ENCODE measurements at regions of chr2 and their contacts with region 1.

Region 1: DNA sequence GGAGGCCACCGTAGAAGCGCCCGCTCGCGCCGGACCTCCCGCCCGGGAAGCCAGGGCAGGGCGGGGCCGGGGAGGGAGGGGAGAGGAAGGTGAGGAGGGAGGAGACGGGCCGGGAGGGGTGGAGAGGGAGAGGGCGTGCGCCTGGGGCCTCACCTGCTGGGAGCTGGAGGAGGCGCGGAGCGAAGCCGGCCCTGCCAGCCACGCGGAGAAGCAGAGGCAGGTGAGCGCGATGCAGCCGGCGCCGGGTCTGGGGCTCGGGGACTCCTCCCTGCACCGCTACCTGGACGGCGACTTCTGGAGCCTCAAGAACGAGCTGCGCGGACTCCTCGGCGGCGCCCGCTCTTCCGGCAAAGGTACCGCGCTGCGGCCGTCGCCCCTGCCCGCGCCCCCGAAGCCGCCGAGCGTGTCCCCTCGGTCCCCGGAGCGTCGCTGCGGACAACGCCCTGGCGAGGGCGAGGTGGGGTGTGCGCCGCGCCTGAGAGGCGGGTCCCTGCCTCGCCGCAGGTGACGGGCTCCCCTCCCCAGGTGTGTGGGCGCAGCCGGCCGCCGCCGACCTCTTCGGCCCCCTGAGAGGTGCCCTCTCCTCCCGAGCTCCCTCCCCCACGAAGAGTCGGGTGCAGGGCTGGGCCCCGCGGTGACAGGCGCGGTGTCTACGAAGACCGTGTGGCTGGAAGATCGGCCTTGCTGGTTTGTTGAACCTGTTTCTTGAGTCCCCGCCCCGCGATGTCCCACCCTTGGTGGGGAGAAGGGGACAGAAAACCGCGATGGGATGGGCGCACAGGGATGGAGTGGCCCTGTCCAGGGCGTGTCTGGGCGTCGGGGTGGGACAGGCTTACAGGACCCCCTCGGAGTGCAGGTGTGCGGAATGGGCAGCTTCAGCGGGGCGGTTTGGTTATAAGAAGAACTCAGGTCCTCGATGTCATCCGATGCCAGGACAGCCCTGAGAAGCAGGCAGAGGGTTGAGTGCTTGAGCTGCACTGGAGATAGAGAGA is at the start of gene ACOXL:
- DNase-seq: no peak
- H3K4me3 ChIP-seq: peak within 1 kb of the TSS; percentile 9 to 35
- H3K27ac ChIP-seq: no peak within 1 kb of the TSS
- H3K4me1 ChIP-seq: peaks cover 0 to 15% (median 12%) of the 10 kb centered on the region in 4 donors
- H3K27me3 ChIP-seq: peaks cover 0 to 49% of the 10 kb centered on the region in 2 donors
- CTCF ChIP-seq: no peak

Region 2: GRCh38 chr2:110688594-110689091 is 44.1 kb before region 1 on chr2:
- intact Hi-C with region 1: loop called (anchors 10 kb)
- DNase-seq: no peak
- H3K4me3 ChIP-seq: no peak overlapping the region
- H3K27ac ChIP-seq: no peak overlapping the region
- H3K4me1 ChIP-seq: no peaks in the 10 kb centered on the region
- H3K27me3 ChIP-seq: no peaks in the 10 kb centered on the region
- CTCF ChIP-seq: no peak

Region 3: GRCh38 chr2:110788976-110789375 is 56.3 kb after region 1 on chr2:
- intact Hi-C with region 1: no loop called
- DNase-seq: no peak
- H3K4me3 ChIP-seq: no peak overlapping the region
- H3K27ac ChIP-seq: no peak overlapping the region
- H3K4me1 ChIP-seq: no peaks in the 10 kb centered on the region
- H3K27me3 ChIP-seq: peaks cover 0 to 29% of the 10 kb centered on the region in 2 donors
- CTCF ChIP-seq: no peak

Region 4: DNA sequence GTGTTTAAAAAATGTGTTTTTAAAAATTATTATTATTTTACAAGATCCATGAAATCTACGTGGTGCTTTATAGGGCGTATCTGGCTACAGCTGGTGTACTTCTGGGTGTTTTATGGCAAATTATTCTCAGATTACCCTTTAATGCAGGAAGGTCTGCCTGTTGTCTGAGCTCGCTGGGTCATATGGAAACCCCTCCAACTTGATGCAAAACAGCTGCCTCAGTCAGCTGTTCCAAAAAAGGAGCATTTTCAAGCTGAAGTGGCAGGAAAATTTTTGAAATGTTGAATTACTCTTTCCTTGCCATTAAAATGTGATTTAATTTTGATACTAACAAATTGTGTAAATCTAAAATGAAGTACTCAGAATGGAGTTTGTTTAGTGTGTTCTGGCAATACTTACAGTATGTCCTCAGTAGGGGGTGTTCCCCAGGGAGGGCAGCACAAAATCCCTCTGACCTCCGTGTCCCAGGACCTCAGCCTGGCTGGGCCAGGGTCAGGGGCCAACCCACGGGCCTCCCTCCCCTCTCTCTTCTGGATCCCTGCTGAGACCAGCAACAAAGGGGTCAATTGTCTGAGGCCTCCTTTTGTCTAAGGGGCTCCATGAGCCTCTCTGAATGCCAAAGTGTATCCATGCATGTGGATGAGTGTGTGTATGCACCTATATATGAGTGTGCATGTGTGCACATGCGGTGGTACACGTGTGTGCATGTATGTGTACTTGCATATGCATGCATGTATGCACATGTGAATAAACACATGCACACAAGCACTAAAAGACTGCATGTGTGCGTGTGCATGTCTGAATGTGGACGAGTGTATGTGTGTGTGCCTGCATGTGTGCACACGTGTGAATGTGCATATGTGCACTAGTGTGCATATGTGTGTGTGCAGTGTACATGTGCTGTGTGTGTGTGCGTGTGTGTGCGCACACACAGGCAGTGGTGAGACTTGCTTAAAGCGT is 105.0 kb after region 1 on chr2:
- intact Hi-C with region 1: no loop called
- DNase-seq: no peak
- H3K4me3 ChIP-seq: no peak overlapping the region
- H3K27ac ChIP-seq: no peak overlapping the region
- H3K4me1 ChIP-seq: no peaks in the 10 kb centered on the region
- H3K27me3 ChIP-seq: peaks cover 0 to 7% of the 10 kb centered on the region in 2 donors
- CTCF ChIP-seq: no peak

Region 5: DNA sequence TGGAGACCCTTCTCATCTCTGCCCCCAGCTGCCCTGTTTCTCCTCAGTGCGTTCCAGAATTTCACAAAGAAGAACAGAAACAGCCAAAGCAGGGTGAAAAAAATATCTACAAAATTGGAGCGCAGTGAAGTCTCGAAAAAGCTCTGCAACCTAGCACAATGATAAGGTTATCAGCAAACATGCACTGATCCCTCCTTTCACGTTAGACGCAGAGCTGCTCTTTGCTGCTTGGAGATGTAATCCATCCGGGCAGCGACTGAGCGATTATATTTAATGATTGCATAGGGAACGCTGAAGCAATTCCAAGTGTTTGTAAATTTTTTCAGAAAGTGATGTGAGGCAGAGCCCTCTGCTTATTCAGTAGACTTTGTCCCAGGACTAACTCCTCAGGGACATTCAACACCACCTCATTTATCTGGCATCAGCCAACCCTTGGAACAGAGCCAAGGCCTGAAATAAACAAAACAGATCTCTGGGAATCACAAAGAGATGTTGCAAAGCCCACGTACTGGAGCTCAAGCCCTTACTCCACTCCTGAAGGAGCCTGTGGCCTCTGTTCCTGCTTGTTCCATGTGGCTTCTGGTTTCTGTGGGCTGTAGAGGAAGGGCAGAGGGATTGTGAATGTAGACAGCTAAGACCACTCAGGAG is 215.4 kb after region 1 on chr2:
- intact Hi-C with region 1: no loop called
- DNase-seq: no peak
- H3K4me3 ChIP-seq: no peak overlapping the region
- H3K27ac ChIP-seq: no peak overlapping the region
- H3K4me1 ChIP-seq: no peaks in the 10 kb centered on the region
- H3K27me3 ChIP-seq: peaks cover 0 to 10% of the 10 kb centered on the region in 2 donors
- CTCF ChIP-seq: no peak

Region 6: GRCh38 chr2:112314856-112315255 is 1582.1 kb after region 1 on chr2:
- intact Hi-C with region 1: no loop called
- DNase-seq: no peak
- H3K4me3 ChIP-seq: no peak overlapping the region
- H3K27ac ChIP-seq: no peak overlapping the region
- H3K4me1 ChIP-seq: peaks cover 0 to 7% (median 0%) of the 10 kb centered on the region in 4 donors
- H3K27me3 ChIP-seq: no peaks in the 10 kb centered on the region
- CTCF ChIP-seq: no peak